Naive thymus-derived CD4-positive, alpha-beta T cell (primary cell): ENCODE measurements at regions of chr17 and their contacts with region 1.

Region 1: DNA sequence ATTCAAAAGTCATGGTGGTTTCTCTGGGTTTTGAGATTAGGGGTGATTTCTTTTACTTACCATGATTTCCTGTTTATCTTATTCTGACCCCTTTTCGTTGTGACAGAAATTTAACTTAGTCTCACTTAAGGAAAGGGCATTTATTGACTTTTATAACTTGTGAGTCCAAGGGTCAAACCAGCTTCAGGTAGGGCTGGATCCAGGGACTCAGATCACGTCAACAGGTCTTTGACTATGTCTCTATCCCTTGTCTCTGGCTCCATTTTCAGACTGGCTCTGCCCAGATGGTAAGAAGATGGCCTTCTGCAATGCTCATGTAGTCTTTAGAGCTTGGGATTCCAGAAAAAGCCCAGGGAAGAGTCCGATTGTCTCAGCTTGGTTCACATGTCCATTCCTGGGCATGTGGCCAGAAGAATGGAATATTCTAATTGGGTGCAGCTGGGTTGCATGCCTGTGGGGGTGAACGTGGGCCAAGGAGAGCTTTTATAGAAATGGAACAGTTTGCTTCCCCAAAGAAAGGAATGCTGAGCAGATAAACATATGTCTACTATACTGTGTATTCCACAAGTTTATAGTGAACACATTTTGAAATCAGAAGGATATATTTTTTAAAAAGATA is 13.4 kb downstream of the USP43 start:
- DNase-seq: no peak
- ATAC-seq: no peak
- H3K4me3 ChIP-seq: no peak overlapping the region
- H3K4me3 Mint-ChIP-seq: no peak overlapping the region
- H3K27ac ChIP-seq: no peak overlapping the region
- H3K27ac Mint-ChIP-seq: no peak overlapping the region
- H3K4me1 ChIP-seq: no peaks in the 10 kb centered on the region
- H3K4me1 Mint-ChIP-seq: no peaks in the 10 kb centered on the region
- H3K27me3 ChIP-seq: no peaks in the 10 kb centered on the region
- H3K27me3 Mint-ChIP-seq: peaks cover 2 to 20% (median 15%) of the 10 kb centered on the region in 5 donors

Region 2: DNA sequence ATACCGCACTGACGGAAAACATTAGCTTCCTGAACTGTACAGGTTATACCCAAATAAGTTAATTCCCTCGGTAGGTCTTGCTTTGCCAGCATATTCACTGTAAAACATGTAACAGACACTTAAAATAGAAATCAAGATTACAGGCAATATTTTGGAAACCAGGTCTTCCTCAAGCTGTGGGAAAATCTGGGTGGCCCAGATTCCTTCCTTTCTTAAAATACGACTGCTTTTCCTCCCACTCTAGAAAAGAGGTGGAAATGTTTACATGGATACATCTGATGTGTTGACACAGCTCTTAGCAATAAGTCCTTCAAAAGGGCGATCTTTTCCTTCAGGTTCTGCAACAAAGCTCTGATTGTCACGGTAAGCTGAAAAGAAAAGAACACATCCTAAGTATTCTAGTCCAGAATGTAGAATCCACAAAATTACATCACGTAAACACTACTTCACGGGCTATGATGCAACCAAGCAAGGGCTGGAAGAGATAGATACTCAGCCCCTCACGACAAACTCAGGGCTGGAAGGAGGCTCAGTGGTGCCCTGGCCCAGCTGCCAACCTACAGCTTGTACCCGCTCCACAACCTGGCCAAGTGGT is 101.4 kb before region 1 on chr17:
- CTCF ChIA-PET with region 1: no interaction called
- POLR2A ChIA-PET with region 1: no interaction called
- intact Hi-C with region 1: no loop called
- DNase-seq: no peak
- ATAC-seq: no peak
- H3K4me3 ChIP-seq: no peak overlapping the region
- H3K4me3 Mint-ChIP-seq: no peak overlapping the region
- H3K27ac ChIP-seq: no peak overlapping the region
- H3K27ac Mint-ChIP-seq: no peak overlapping the region
- H3K4me1 ChIP-seq: no peaks in the 10 kb centered on the region
- H3K4me1 Mint-ChIP-seq: peaks cover 0 to 12% (median 8%) of the 10 kb centered on the region in 7 donors
- H3K27me3 ChIP-seq: no peaks in the 10 kb centered on the region
- H3K27me3 Mint-ChIP-seq: no peaks in the 10 kb centered on the region

Region 3: DNA sequence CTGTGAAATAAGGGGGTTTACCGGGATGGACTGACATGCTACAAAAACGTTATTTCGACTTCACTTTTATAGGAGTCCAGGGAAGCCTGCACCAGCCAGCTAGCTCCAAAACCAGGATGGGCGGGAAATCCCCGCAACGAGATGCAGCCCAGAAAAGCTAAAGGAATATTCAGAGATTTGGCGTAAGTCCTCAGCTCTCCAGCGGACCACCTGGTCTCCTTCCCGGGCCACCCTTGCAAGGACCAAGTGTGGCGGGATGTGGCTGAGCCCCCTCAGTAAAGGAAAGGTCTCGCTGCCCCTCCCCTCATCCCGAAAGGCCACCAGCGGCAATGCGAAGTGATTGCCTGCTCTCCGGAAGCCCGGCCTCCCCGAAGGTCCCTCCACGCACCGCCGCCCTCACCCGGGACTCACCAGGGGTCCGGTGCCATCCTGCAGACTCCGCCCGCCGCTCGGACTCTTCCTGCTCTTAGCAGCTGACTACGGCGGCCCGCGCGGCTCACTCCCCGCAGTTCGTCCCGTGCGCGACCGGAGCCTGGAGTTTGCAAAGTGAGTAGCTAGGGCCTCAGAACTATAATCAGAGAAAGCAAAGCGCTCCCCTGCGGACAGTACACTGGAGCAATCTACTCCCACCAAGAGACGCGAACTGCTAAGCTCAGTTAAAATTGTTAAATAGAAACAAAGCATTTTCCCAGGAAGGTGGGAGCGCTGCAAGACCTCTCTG is 83.2 kb before region 1 on chr17 and contains the start of gene STX8:
- CTCF ChIA-PET with region 1: no interaction called
- POLR2A ChIA-PET with region 1: no interaction called
- intact Hi-C with region 1: loop called in 1 of 2 experiments (anchors 10 kb)
- DNase-seq: peak; percentile 56 to 84 (median 68)
- ATAC-seq: peak; percentile 85
- H3K4me3 ChIP-seq: peak within 1 kb of the TSS; percentile 89
- H3K4me3 Mint-ChIP-seq: peak within 1 kb of the TSS; percentile 97 to 100 (median 99)
- H3K27ac ChIP-seq: peak within 1 kb of the TSS; percentile 67
- H3K27ac Mint-ChIP-seq: peak within 1 kb of the TSS; percentile 82 to 94 (median 92)
- H3K4me1 ChIP-seq: peaks cover 0 to 10% of the 10 kb centered on the region in 2 donors
- H3K4me1 Mint-ChIP-seq: peaks cover 18 to 36% (median 33%) of the 10 kb centered on the region in 7 donors
- H3K27me3 ChIP-seq: no peaks in the 10 kb centered on the region
- H3K27me3 Mint-ChIP-seq: no peaks in the 10 kb centered on the region
- total RNA-seq, gene STX8: 45.1 to 71.3 (median 48.9) TPM